ENCODE measurements at regions of chr17 and their contacts with region 1.

Region 1: DNA sequence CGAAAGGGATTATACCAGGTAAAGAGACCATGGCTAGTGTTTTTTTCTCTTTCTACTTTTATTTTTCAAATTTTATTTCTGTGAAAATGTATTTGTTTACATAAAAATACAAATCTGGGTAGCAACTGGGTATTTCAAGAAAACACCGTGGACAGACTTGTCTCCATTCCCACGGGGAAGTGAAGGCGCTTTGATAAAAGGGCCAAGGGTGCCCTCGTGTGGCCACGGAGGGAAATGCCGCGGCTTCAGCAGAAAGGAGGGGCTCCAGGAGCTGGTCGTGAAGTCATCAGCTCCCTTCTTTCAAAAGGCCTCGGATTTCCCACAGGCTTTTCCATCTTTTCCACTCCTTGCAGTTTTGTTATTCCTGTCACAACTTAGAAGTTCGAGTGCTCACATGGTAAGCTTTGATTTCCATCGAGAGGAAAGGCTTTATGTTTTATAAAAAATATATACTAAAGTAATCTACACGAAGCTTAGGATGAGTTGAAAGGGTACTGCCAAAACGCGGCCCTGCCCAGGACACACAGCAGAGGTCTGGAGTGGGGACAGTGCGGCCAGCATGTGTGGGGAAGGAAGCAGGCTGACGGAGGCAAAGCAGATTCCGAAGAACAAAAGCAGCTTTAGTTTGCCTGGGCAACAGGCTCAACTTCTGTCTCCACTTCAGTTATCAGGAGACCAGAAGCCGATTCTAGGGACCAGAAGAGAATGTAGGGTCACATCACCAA is 15.3 kb upstream of the MNT start:
- DNase-seq: peak; percentile 94
- ATAC-seq: peak; percentile 81

Region 2: GRCh38 chr17:2282297-2282873 is 133.8 kb before region 1 on chr17:
- intact Hi-C with region 1: no loop called
- DNase-seq: no peak
- ATAC-seq: peak; percentile 52

Region 3: GRCh38 chr17:2361010-2361760 is 55.0 kb before region 1 on chr17:
- intact Hi-C with region 1: no loop called
- DNase-seq: no peak
- ATAC-seq: no peak

Region 4: DNA sequence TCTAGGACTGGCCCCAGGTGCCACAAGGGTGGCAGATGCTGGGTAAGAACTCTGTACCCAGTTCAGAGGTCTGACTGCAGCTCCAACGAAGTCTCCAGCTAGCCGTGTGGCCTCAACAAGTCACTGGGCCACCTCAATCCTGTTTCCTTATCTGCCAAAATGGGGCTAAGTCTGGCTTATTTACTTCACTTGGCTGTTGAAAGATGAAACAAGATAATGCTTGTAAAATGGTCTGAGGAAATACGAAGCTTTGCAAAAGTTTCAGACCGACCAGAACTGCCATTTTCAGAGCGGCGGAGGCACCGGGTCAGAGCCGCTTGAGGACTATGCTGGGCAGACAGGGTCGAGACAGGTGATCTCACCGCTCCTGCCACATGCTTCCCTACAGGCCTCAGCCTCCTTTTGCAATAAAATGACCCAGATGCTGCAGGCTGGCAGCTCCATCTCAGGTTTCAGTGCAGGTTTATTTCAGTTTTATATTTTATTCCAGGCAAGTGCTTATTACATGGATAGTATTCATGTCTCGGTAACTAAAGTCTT is 32.5 kb before region 1 on chr17:
- intact Hi-C with region 1: loop called (anchors 2 kb)
- DNase-seq: no peak
- ATAC-seq: no peak